Heart right ventricle (tissue), 16 donors: ENCODE measurements at regions of chr5 and their contacts with region 1.

Region 1: GRCh38 chr5:138018844-138019243 is 14.0 kb downstream of the FAM13B start:
- DNase-seq: no peak
- ATAC-seq: no peak
- H3K4me3 ChIP-seq: no peak overlapping the region
- H3K27ac ChIP-seq: no peak overlapping the region
- H3K4me1 ChIP-seq: peaks cover 0 to 34% (median 7%) of the 10 kb centered on the region in 9 donors
- H3K27me3 ChIP-seq: no peaks in the 10 kb centered on the region
- CTCF ChIP-seq: no peak

Region 2: GRCh38 chr5:137310051-137310730 is 708.7 kb before region 1 on chr5:
- intact Hi-C with region 1: loop called in 1 of 10 experiments (anchors 5 kb)
- DNase-seq: no peak
- ATAC-seq: peak in 2 of 8 donors; percentile 9 to 36
- H3K4me3 ChIP-seq: no peak overlapping the region
- H3K27ac ChIP-seq: peak overlapping the region in 1 of 10 donors; percentile 10
- H3K4me1 ChIP-seq: peaks cover 0 to 30% (median 10%) of the 10 kb centered on the region in 9 donors
- H3K27me3 ChIP-seq: no peaks in the 10 kb centered on the region
- CTCF ChIP-seq: no peak